Panc1 (cell line): ENCODE measurements at regions of chr3 and their contacts with region 1.

Region 1: GRCh38 chr3:123449102-123449996 is 459 bp upstream of the ADCY5 start:
- DNase-seq: no peak
- ATAC-seq: peak; percentile 77
- H3K4me3 ChIP-seq: peak overlapping the region; percentile 52 to 58
- H3K27ac ChIP-seq: no peak overlapping the region
- H3K4me1 ChIP-seq: no peaks in the 10 kb centered on the region; the same call in 1 of the 2 replicates
- H3K27me3 ChIP-seq: peaks cover 29% of the 10 kb centered on the region
- CTCF ChIP-seq: no peak

Region 2: GRCh38 chr3:122589297-122589696 is 860.1 kb before region 1 on chr3:
- CTCF ChIA-PET with region 1: no interaction called
- POLR2A ChIA-PET with region 1: no interaction called
- in situ Hi-C with region 1: no loop called
- intact Hi-C with region 1: no loop called
- DNase-seq: no peak
- ATAC-seq: no peak
- H3K4me3 ChIP-seq: no peak overlapping the region
- H3K27ac ChIP-seq: no peak overlapping the region
- H3K4me1 ChIP-seq: no peaks in the 10 kb centered on the region
- H3K27me3 ChIP-seq: 0 out of 2 replicates have a peak, but pooled peaks cover 3% of the 10 kb centered on the region
- CTCF ChIP-seq: no peak

Region 3: DNA sequence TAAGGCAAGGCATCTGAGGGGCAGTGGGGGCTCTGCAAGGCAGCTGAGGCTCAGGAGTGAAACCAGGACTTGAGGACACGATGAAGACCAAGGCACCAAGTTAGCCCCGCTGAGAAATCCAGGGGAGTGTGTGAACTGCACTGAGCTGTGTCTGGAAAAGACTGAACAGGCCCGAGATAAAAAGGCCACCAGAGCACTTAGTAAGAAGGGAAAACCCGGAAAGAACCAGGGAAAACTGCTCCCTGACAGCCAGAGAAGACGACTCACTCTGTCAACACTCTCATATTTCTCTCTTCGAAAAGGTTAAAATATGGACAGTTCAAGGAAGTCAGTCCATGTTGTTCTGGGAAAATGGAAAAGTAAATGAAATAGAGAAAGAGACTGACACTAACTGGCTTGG is 138.6 kb before region 1 on chr3:
- CTCF ChIA-PET with region 1: no interaction called
- POLR2A ChIA-PET with region 1: interaction called, 13 read pairs
- in situ Hi-C with region 1: no loop called
- intact Hi-C with region 1: no loop called
- DNase-seq: no peak
- ATAC-seq: no peak
- H3K4me3 ChIP-seq: no peak overlapping the region
- H3K27ac ChIP-seq: no peak overlapping the region
- H3K4me1 ChIP-seq: no peaks in the 10 kb centered on the region
- H3K27me3 ChIP-seq: peaks cover 13% of the 10 kb centered on the region
- CTCF ChIP-seq: no peak

Region 4: GRCh38 chr3:123397921-123398795 is 51.2 kb before region 1 on chr3:
- CTCF ChIA-PET with region 1: no interaction called
- POLR2A ChIA-PET with region 1: no interaction called
- in situ Hi-C with region 1: no loop called
- intact Hi-C with region 1: no loop called
- DNase-seq: no peak
- ATAC-seq: no peak
- H3K4me3 ChIP-seq: no peak overlapping the region
- H3K27ac ChIP-seq: no peak overlapping the region
- H3K4me1 ChIP-seq: no peaks in the 10 kb centered on the region
- H3K27me3 ChIP-seq: peaks cover 24% of the 10 kb centered on the region
- CTCF ChIP-seq: no peak

Region 5: DNA sequence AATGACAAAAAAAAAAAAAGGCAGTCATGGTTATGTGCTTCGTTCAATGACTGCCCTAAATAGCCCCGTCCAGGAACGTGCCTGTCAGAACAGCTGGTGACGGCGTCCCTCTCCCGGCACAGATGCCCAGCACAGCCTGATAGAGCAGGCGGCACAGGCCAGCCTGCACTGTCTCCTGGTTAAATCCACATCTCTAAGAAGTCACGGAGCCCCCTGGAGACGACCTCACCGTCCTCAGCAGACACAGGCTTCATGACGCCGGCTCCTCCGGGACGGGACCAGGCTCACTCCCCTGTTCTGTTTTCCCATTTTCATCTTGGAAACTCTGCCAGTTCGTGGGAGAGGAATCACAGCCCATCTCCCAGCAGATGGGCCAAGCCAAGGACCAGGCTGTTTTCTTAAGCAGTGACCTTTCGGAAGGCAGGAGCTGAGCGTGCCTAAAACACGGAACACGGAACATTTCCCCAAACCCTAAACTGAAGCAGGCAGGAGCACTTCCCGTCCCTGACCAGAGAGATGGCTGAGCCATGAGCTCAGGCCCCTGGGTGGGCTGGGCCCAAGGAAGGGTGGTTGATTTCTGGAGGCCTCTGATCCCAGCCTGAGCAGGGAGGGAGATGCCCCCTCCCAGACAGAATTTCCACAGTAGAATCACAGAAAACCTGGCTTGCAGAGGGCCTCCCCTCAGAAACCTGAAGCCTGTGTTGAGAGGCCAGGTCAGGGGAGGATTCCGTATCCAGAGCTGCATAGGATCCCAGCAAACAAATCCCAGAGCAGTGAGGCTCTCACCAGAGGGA is 36.3 kb before region 1 on chr3:
- CTCF ChIA-PET with region 1: interaction called, 10 read pairs
- POLR2A ChIA-PET with region 1: no interaction called
- in situ Hi-C with region 1: no loop called
- intact Hi-C with region 1: no loop called
- DNase-seq: no peak
- ATAC-seq: no peak
- H3K4me3 ChIP-seq: no peak overlapping the region
- H3K27ac ChIP-seq: no peak overlapping the region
- H3K4me1 ChIP-seq: no peaks in the 10 kb centered on the region
- H3K27me3 ChIP-seq: 0 out of 2 replicates have a peak, but pooled peaks cover under 1% of the 10 kb centered on the region
- CTCF ChIP-seq: no peak

Region 6: GRCh38 chr3:123431658-123432324 is 17.6 kb before region 1 on chr3:
- CTCF ChIA-PET with region 1: interaction called, 3 read pairs
- POLR2A ChIA-PET with region 1: no interaction called
- in situ Hi-C with region 1: no loop called
- intact Hi-C with region 1: loop called (anchors 2 kb)
- DNase-seq: no peak
- ATAC-seq: no peak
- H3K4me3 ChIP-seq: no peak overlapping the region
- H3K27ac ChIP-seq: no peak overlapping the region
- H3K4me1 ChIP-seq: no peaks in the 10 kb centered on the region
- H3K27me3 ChIP-seq: peaks cover 2% of the 10 kb centered on the region
- CTCF ChIP-seq: no peak

Region 7: GRCh38 chr3:123535580-123535979 is 86.2 kb after region 1 on chr3:
- CTCF ChIA-PET with region 1: no interaction called
- POLR2A ChIA-PET with region 1: interaction called, 11 read pairs
- in situ Hi-C with region 1: no loop called
- intact Hi-C with region 1: no loop called
- DNase-seq: no peak
- ATAC-seq: peak; percentile 65; the same call in 1 of the 2 replicates
- H3K4me3 ChIP-seq: no peak overlapping the region
- H3K27ac ChIP-seq: no peak overlapping the region
- H3K4me1 ChIP-seq: no peaks in the 10 kb centered on the region
- H3K27me3 ChIP-seq: no peaks in the 10 kb centered on the region
- CTCF ChIP-seq: no peak

Region 8: DNA sequence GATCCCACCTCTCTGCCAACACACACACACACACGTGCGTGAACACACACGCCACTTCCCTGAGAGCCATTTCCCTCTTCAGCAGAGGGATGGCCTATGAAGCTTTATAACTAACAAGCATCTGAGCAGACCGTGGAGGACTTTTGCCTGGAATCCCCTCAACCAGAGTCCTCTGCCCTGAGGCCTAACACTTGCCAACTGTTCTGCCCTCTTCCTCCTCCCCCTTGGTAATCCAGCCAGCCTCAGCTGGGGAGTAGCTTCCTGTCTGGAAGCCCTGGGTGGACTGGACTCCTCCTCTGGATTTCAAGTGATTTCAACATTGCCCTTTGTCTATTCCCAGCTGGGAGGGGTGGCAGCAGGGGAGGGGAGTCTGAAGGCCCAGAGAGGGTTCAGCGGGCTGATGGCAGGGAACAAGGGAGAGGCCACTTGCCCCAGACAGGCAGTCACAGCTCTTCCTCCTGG is 203.9 kb after region 1 on chr3:
- CTCF ChIA-PET with region 1: no interaction called
- POLR2A ChIA-PET with region 1: no interaction called
- in situ Hi-C with region 1: no loop called
- intact Hi-C with region 1: no loop called
- DNase-seq: no peak
- ATAC-seq: peak; percentile 24; the same call in 1 of the 2 replicates
- H3K4me3 ChIP-seq: no peak overlapping the region
- H3K27ac ChIP-seq: no peak overlapping the region
- H3K4me1 ChIP-seq: no peaks in the 10 kb centered on the region
- H3K27me3 ChIP-seq: no peaks in the 10 kb centered on the region
- CTCF ChIP-seq: no peak

Region 9: GRCh38 chr3:123732473-123733157 is 283.3 kb after region 1 on chr3:
- CTCF ChIA-PET with region 1: no interaction called
- POLR2A ChIA-PET with region 1: no interaction called
- in situ Hi-C with region 1: no loop called
- intact Hi-C with region 1: no loop called
- DNase-seq: peak; percentile 88
- ATAC-seq: peak; percentile 90
- H3K4me3 ChIP-seq: no peak overlapping the region
- H3K27ac ChIP-seq: no peak overlapping the region
- H3K4me1 ChIP-seq: 0 out of 2 replicates have a peak, but pooled peaks cover 2% of the 10 kb centered on the region
- H3K27me3 ChIP-seq: no peaks in the 10 kb centered on the region
- CTCF ChIP-seq: no peak